Activated T-helper 1 cell treated with anti-CD3 and anti-CD28 coated beads, Interleukin-12 subunit alpha, Interleukin-12 subunit beta, Interleukin-2, Interleukin-4 antibody, amounts not matched to agents 30 ng/mL and 10 ng/mL and 1 ng/mL, durations not matched to agents 14 hours and 24 hours and 36 hours (primary cell): ENCODE measurements at regions of chr17 and their contacts with region 1.

Region 1: GRCh38 chr17:39621523-39622379 is 5.0 kb upstream of the PPP1R1B start:
- DNase-seq: peak; percentile 86
- H3K4me3 Mint-ChIP-seq: peak overlapping the region; percentile 68
- H3K27ac Mint-ChIP-seq: peak overlapping the region; percentile 62
- H3K4me1 Mint-ChIP-seq: peaks cover 27% of the 10 kb centered on the region
- H3K27me3 Mint-ChIP-seq: peaks cover 62% of the 10 kb centered on the region

Region 2: GRCh38 chr17:38550661-38551060 is 1071.1 kb before region 1 on chr17:
- intact Hi-C with region 1: no loop called
- DNase-seq: no peak
- H3K4me3 Mint-ChIP-seq: no peak overlapping the region
- H3K27ac Mint-ChIP-seq: no peak overlapping the region
- H3K4me1 Mint-ChIP-seq: no peaks in the 10 kb centered on the region
- H3K27me3 Mint-ChIP-seq: peaks cover 11% of the 10 kb centered on the region

Region 3: DNA sequence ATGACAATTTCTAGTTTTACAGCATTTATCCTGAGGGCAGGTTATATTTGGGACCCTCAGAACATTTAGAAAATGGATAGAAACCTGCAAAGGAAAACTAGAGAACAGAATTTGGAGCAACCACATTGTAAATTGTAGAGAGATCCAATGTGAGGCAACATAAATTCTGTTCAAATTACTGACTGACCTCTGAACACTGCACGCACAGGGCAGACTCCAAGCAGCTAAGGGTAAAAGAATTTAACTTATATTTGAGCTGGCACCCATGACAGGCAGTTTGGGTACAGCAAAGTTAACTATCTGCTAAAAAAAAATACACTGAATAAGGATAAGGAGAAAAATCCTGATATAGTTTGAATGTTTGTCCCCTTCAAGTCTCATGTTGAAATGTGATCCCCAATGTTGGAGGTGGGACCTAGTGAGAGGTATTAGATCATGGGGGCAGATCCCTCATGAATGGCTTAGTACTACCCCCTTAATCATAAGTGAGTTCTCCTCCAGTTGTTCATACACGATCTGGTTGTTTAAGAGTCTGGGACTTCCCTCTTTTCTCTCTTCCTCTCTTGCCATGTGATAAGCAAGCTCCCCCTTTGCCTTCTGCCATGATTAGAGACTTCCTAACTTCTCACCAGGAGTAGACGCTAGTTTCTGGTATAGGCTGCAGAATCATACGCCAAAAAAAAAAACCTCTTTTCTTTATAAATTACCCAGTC is 296.1 kb before region 1 on chr17:
- intact Hi-C with region 1: no loop called
- DNase-seq: no peak
- H3K4me3 Mint-ChIP-seq: no peak overlapping the region
- H3K27ac Mint-ChIP-seq: no peak overlapping the region
- H3K4me1 Mint-ChIP-seq: no peaks in the 10 kb centered on the region
- H3K27me3 Mint-ChIP-seq: no peaks in the 10 kb centered on the region

Region 4: DNA sequence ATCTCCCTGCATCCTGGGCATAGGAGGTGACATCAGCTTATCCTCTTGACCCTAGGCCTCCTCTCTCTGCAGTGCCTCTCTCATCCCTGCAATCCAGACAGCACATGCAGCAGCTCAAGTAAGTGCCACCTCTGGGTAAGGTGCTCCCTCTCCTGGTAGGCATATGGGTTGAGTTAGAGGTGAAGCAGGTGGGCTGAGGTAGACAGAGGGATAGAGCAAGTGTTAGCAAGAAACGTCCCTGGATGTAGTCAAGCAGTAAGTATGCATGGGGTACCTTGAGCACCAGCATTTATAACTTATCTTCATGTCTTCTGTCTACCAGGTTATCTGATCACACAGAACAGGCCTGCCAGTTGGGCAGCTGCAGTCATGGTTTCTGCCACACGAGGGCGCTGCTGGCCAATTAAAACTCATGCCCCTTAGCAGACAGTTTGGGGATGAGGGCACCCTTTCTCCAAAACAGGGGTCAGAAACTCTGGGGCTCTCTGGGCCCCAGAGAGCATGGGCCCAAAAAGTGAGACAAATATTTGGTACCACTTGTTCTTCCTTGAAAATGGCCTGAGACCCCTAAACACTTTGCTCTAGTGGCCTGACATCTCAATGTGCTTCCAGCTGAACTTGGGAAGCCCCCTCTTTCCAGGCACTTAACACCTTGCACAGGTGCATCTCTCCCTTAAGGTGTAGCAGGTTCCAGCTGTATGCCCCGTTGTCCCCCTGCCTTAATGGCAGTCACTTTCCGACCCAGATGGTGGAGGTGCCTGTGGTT is 73.9 kb before region 1 on chr17:
- intact Hi-C with region 1: loop called (anchors 1 kb)
- DNase-seq: peak; percentile 48
- H3K4me3 Mint-ChIP-seq: no peak overlapping the region
- H3K27ac Mint-ChIP-seq: no peak overlapping the region
- H3K4me1 Mint-ChIP-seq: no peaks in the 10 kb centered on the region
- H3K27me3 Mint-ChIP-seq: no peaks in the 10 kb centered on the region

Region 5: GRCh38 chr17:39653662-39654331 is 32.0 kb after region 1 on chr17:
- intact Hi-C with region 1: loop called (anchors 1 kb)
- DNase-seq: peak; percentile 59
- H3K4me3 Mint-ChIP-seq: no peak overlapping the region
- H3K27ac Mint-ChIP-seq: no peak overlapping the region
- H3K4me1 Mint-ChIP-seq: no peaks in the 10 kb centered on the region
- H3K27me3 Mint-ChIP-seq: no peaks in the 10 kb centered on the region

Region 6: GRCh38 chr17:39730095-39730921 is 108.6 kb after region 1 on chr17 and contains the start of gene MIEN1:
- intact Hi-C with region 1: loop called (anchors 1 kb)
- DNase-seq: peak; percentile 90
- H3K4me3 Mint-ChIP-seq: peak within 1 kb of the TSS; percentile 92
- H3K27ac Mint-ChIP-seq: peak within 1 kb of the TSS; percentile 85
- H3K4me1 Mint-ChIP-seq: peaks cover 11% of the 10 kb centered on the region
- H3K27me3 Mint-ChIP-seq: peaks cover 7% of the 10 kb centered on the region
- total RNA-seq, gene MIEN1: 33.3 and 37.1 TPM in 2 replicates